Prostate gland (tissue), 2 donors: ENCODE measurements at regions of chr9 and their contacts with region 1.

Region 1: GRCh38 chr9:86434039-86434726 is 80.0 kb upstream of the TUT7 start:
- DNase-seq: peak; percentile 13
- H3K4me3 ChIP-seq: no peak overlapping the region
- H3K27ac ChIP-seq: peak overlapping the region in 1 of 2 donors; percentile 33
- H3K4me1 ChIP-seq: no peaks in the 10 kb centered on the region
- H3K27me3 ChIP-seq: no peaks in the 10 kb centered on the region
- CTCF ChIP-seq: peak in 3 of 4 experiments; percentile 60 to 74 (median 72)
- POLR2A ChIP-seq: no peak

Region 2: GRCh38 chr9:86486891-86487837 is 53.0 kb after region 1 on chr9:
- intact Hi-C with region 1: loop called (anchors 5 kb)
- DNase-seq: no peak
- H3K4me3 ChIP-seq: no peak overlapping the region
- H3K27ac ChIP-seq: no peak overlapping the region
- H3K4me1 ChIP-seq: no peaks in the 10 kb centered on the region
- H3K27me3 ChIP-seq: no peaks in the 10 kb centered on the region
- CTCF ChIP-seq: peak; percentile 33 to 77 (median 68)
- POLR2A ChIP-seq: no peak

Region 3: GRCh38 chr9:87250205-87250604 is 816.0 kb after region 1 on chr9:
- intact Hi-C with region 1: no loop called
- DNase-seq: no peak
- H3K4me3 ChIP-seq: no peak overlapping the region
- H3K27ac ChIP-seq: no peak overlapping the region
- H3K4me1 ChIP-seq: no peaks in the 10 kb centered on the region
- H3K27me3 ChIP-seq: no peaks in the 10 kb centered on the region
- CTCF ChIP-seq: no peak
- POLR2A ChIP-seq: no peak

Region 4: GRCh38 chr9:87324613-87325194 is 890.5 kb after region 1 on chr9:
- intact Hi-C with region 1: loop called (anchors 5 kb)
- DNase-seq: peak; percentile 36
- H3K4me3 ChIP-seq: no peak overlapping the region
- H3K27ac ChIP-seq: no peak overlapping the region
- H3K4me1 ChIP-seq: no peaks in the 10 kb centered on the region
- H3K27me3 ChIP-seq: no peaks in the 10 kb centered on the region
- CTCF ChIP-seq: peak; percentile 31 to 87 (median 81)
- POLR2A ChIP-seq: no peak